ENCODE measurements at regions of chr14 and their contacts with region 1.

Region 1: DNA sequence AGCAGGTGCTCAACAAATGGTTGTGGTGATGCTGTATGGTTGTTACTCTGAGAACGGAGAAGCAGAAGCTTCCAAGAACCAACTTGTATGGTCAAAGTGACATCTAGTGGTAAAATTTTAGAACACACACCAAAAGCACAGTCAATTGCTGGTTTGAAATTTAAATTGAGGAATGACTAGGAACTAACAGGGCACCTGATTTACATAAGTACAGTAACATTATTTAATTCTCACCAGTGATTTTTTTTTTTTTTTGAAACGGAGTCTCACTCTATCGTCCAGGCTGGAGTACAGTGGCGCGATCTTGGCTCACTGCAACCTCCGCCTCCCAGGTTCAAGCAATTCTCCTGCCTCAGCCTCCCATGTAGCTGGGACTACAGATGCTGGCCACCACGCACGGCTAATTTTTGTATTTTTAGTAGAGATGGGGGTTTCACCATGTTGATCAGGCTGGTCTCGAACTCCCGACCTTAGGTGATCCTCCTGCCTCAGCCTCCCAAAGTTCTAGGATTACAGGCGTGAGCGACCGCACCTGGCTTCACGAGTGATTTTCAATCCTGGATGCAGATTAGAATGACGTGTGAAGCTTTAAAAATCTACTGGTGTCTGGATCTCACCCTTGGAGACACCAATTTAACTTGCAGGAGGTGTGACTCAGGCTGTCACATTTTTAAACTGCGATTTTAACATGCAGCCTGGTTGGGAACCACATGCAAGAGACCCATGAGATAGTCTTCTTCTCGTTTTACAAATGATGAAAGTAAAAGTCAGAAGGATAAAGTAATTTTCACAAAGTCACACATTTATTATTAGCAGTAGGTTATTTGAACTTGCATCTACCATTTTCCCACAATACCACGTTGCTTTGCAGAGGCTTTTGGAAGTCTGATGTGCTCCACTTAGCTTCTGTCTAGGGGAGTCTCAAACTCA is 14.1 kb upstream of the NUMB start:
- DNase-seq: peak; percentile 77
- H3K4me3 Mint-ChIP-seq: no peak overlapping the region
- H3K27ac Mint-ChIP-seq: no peak overlapping the region
- H3K4me1 Mint-ChIP-seq: peaks cover 19% of the 10 kb centered on the region
- H3K27me3 Mint-ChIP-seq: peaks cover 4% of the 10 kb centered on the region

Region 2: DNA sequence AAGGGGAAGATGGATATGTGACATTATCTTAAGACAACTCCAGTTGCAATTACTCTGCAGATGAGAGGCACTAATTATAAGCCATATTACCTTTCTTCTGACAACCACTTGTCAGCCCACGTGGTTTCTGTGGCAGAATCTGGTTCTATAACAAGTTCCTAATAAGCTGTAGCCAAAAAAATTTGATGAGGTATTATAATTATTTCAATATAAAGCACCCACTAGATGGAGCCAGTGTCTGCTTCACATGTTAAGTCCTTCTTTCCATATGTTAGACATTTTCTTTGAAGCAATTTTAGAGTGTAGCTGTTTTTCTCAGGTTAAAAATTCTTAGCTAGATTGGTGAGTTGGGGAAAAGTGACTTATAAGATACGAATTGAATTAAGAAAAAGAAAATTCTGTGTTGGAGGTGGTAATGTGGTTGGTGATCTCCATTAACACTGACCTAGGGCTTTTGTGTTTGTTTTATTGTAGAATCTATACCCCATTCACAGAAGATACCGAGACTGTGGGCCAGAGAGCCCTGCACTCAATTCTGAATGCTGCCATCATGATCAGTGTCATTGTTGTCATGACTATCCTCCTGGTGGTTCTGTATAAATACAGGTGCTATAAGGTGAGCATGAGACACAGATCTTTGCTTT is 299.2 kb before region 1 on chr14:
- intact Hi-C with region 1: loop called (anchors 1 kb)
- DNase-seq: no peak
- H3K4me3 Mint-ChIP-seq: no peak overlapping the region
- H3K27ac Mint-ChIP-seq: no peak overlapping the region
- H3K4me1 Mint-ChIP-seq: peaks cover 3% of the 10 kb centered on the region
- H3K27me3 Mint-ChIP-seq: no peaks in the 10 kb centered on the region

Region 3: GRCh38 chr14:73295198-73295796 is 177.2 kb before region 1 on chr14:
- intact Hi-C with region 1: loop called (anchors 1 kb)
- DNase-seq: peak; percentile 64
- H3K4me3 Mint-ChIP-seq: no peak overlapping the region
- H3K27ac Mint-ChIP-seq: no peak overlapping the region
- H3K4me1 Mint-ChIP-seq: peaks cover 24% of the 10 kb centered on the region
- H3K27me3 Mint-ChIP-seq: no peaks in the 10 kb centered on the region

Region 4: GRCh38 chr14:73500360-73500759 is 27.9 kb after region 1 on chr14:
- intact Hi-C with region 1: no loop called
- DNase-seq: no peak
- H3K4me3 Mint-ChIP-seq: no peak overlapping the region
- H3K27ac Mint-ChIP-seq: no peak overlapping the region
- H3K4me1 Mint-ChIP-seq: peaks cover 5% of the 10 kb centered on the region
- H3K27me3 Mint-ChIP-seq: no peaks in the 10 kb centered on the region

Measured in activated CD4-positive, alpha-beta T cell treated with anti-CD3 and anti-CD28 coated beads, Interleukin-2, amount 10 ng/mL, durations not matched to agents 24 days and 14 days (primary cell).